ENCODE measurements at regions of chr14 and their contacts with region 1.

Region 1: GRCh38 chr14:77799863-77800730 is at the start of gene ADCK1:
- DNase-seq: peak; percentile 90
- ATAC-seq: peak; percentile 90
- H3K4me3 ChIP-seq: peak within 1 kb of the TSS; percentile 47 to 91 (median 71)
- H3K4me3 Mint-ChIP-seq: peak within 1 kb of the TSS; percentile 92
- H3K27ac ChIP-seq: peak within 1 kb of the TSS; percentile 40 to 87
- H3K27ac Mint-ChIP-seq: peak within 1 kb of the TSS; percentile 89
- H3K4me1 ChIP-seq: peaks cover 4 to 8% of the 10 kb centered on the region in 2 donors
- H3K4me1 Mint-ChIP-seq: peaks cover 12% of the 10 kb centered on the region
- H3K27me3 ChIP-seq: no peaks in the 10 kb centered on the region
- H3K27me3 Mint-ChIP-seq: no peaks in the 10 kb centered on the region
- CTCF ChIP-seq: peak; percentile 14
- total RNA-seq, gene ADCK1: 10.6 and 13.1 TPM in 2 replicates

Region 2: DNA sequence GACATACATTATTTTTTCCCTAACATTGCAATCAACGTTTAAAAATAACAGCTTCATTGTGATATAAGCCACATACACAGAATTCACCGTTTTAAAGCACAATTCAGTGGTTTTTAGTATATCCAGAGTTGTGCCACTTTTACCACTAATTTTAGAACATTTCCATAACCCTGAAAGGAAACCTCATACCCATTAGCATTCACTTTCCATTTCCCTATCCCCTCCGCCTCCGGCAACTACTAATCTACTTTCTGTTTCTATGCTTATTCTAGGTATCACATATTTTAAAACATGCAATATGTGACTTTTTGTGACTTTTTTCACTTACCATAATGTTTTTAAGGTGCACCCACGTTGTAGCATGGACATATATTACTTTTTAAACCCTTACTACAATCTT is 245.9 kb before region 1 on chr14:
- CTCF ChIA-PET with region 1: no interaction called
- POLR2A ChIA-PET with region 1: no interaction called
- intact Hi-C with region 1: no loop called
- DNase-seq: peak; percentile 37
- ATAC-seq: no peak
- H3K4me3 ChIP-seq: no peak overlapping the region
- H3K4me3 Mint-ChIP-seq: no peak overlapping the region
- H3K27ac ChIP-seq: peak overlapping the region; percentile 46 to 73
- H3K27ac Mint-ChIP-seq: no peak overlapping the region
- H3K4me1 ChIP-seq: peaks cover 19 to 36% of the 10 kb centered on the region in 2 donors
- H3K4me1 Mint-ChIP-seq: peaks cover 3% of the 10 kb centered on the region
- H3K27me3 ChIP-seq: no peaks in the 10 kb centered on the region
- H3K27me3 Mint-ChIP-seq: no peaks in the 10 kb centered on the region
- CTCF ChIP-seq: no peak

Region 3: DNA sequence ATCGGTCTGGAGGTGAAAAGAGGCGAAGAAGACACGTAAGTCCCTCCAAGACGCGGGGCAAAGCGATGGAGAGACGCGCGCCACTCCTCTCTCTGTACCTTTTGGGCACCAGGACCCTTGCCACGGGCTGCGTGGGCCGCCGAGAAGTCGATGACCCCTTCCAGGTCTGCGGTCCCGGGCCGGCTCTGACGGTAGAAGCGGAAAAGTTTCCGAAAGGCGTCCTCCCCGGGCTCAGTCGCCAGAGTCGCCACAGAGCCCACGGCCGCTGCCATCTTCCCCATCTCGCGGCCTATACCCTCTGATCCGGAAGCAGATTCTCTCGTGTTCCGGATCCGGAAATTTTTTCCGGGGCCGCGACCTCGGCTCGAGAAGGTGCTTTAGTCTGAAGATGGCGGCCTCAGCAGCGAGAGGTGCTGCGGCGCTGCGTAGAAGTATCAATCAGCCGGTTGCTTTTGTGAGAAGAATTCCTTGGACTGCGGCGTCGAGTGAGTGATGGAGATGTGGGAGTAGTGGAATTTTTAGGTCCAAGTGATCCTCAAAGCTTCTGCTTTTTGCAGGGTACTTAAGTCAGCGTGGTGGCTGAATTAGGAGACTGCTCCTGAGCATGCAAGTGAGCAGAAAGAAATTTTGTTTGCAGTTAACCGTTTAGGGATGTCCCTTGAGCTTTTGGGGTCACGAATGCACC is 92.2 kb before region 1 on chr14 and contains the starts of genes ALKBH1 and SLIRP:
- CTCF ChIA-PET with region 1: no interaction called
- POLR2A ChIA-PET with region 1: no interaction called
- intact Hi-C with region 1: loop called (anchors 1 kb)
- DNase-seq: peak; percentile 91
- ATAC-seq: peak; percentile 97
- H3K4me3 ChIP-seq: peak within 1 kb of the TSS; percentile 82 to 98 (median 92)
- H3K4me3 Mint-ChIP-seq: peak within 1 kb of the TSS; percentile 94
- H3K27ac ChIP-seq: peak within 1 kb of the TSS in 1 of 2 donors; percentile 75
- H3K27ac Mint-ChIP-seq: peak within 1 kb of the TSS; percentile 91
- H3K4me1 ChIP-seq: peaks cover 22 to 32% of the 10 kb centered on the region in 2 donors
- H3K4me1 Mint-ChIP-seq: peaks cover 37% of the 10 kb centered on the region
- H3K27me3 ChIP-seq: no peaks in the 10 kb centered on the region
- H3K27me3 Mint-ChIP-seq: no peaks in the 10 kb centered on the region
- CTCF ChIP-seq: no peak
- total RNA-seq, gene ALKBH1: 19.0 and 21.8 TPM in 2 replicates
- total RNA-seq, gene SLIRP: 30.6 and 33.8 TPM in 2 replicates

Region 4: DNA sequence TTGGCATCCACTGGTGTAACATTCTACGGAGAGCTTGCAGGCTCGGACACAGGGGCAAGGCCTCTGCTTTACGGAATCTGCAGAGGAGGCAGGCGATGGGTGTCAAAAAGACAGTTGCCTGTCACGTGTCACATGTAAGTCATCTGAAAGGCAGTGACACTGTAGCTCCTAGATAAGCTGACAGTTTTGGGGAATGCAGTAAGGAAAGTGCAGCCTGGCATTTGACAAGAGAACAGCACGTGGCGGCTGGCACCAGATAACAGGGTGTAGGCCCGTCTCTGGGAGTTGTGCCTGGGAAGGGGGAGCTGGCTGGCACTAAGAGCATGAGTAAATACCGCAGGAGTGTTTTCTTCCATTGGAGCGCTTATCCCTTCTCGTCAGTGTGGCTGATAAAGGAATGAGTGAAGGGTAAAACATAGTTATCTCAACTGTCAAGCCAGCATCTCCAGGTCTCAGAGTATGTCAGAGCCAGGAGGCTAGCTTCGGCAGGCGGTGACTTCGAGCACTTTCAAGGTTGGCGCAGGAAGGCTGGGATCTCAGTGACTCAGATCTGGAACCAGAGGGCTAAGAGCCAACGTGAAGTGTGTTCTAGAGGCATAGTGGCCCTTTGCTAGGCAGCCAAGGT is 25.9 kb after region 1 on chr14:
- CTCF ChIA-PET with region 1: no interaction called
- POLR2A ChIA-PET with region 1: no interaction called
- intact Hi-C with region 1: no loop called
- DNase-seq: no peak
- ATAC-seq: no peak
- H3K4me3 ChIP-seq: no peak overlapping the region
- H3K4me3 Mint-ChIP-seq: no peak overlapping the region
- H3K27ac ChIP-seq: no peak overlapping the region
- H3K27ac Mint-ChIP-seq: no peak overlapping the region
- H3K4me1 ChIP-seq: no peaks in the 10 kb centered on the region
- H3K4me1 Mint-ChIP-seq: no peaks in the 10 kb centered on the region
- H3K27me3 ChIP-seq: no peaks in the 10 kb centered on the region
- H3K27me3 Mint-ChIP-seq: no peaks in the 10 kb centered on the region
- CTCF ChIP-seq: no peak

Measured in B cell (primary cell).